CD8-positive, alpha-beta memory T cell (primary cell): ENCODE measurements at regions of chr19 and their contacts with region 1.

Region 1: DNA sequence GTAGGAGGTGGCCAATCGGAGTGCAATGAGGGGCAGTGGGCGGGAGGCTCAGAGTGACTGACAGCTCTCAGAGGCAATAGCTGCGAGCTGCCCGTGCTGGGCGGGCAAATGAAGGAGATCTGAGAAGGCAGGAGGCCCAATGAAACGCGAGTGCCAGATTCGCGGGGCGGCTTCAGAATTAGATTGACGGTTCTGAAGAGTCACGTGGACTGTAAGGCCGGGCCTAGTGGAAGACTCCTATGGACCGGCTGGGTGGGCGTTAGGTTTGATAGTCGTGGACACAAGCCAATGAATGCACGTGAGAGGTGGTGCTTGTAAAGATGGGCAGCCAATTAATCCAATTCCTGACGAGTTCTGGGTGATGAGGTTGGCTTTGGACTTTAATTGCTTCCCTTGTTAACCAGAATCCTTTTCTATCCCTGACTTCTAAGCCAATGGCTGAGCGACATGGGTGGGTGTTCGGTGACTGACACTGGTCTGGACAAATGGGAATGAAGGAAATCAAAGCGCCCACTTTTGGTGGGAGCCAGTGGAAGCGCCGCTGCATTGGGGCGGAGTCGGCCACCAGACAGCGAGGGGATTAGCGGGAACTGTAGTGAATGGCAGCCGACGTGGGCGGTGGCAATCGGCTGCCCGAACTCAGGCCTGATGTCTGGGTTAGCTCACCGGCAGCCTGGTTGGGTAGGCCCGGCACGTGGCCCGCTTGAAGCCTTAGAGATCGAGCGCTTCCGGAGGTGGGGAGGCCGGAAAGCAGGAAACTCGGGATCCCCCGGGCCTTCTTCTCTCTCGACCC is 524 bp upstream of the KHSRP start:
- DNase-seq: peak; percentile 97 to 100 (median 99)
- H3K4me3 ChIP-seq: peak overlapping the region; percentile 26
- H3K4me3 Mint-ChIP-seq: peak overlapping the region; percentile 73 to 95 (median 82)
- H3K27ac ChIP-seq: peak overlapping the region; percentile 53
- H3K27ac Mint-ChIP-seq: peak overlapping the region; percentile 74 to 98 (median 90)
- H3K4me1 ChIP-seq: peaks cover 27% of the 10 kb centered on the region
- H3K4me1 Mint-ChIP-seq: peaks cover 30 to 46% (median 33%) of the 10 kb centered on the region in 3 donors
- H3K27me3 ChIP-seq: no peaks in the 10 kb centered on the region
- H3K27me3 Mint-ChIP-seq: peaks cover 0 to 1% of the 10 kb centered on the region in 2 donors

Region 2: GRCh38 chr19:6362027-6362350 is 63.1 kb before region 1 on chr19:
- CTCF ChIA-PET with region 1: no interaction called
- POLR2A ChIA-PET with region 1: interaction called, 10 read pairs
- DNase-seq: no peak
- H3K4me3 ChIP-seq: peak overlapping the region; percentile 71
- H3K4me3 Mint-ChIP-seq: peak overlapping the region; percentile 86 to 98 (median 95)
- H3K27ac ChIP-seq: peak overlapping the region; percentile 85
- H3K27ac Mint-ChIP-seq: peak overlapping the region; percentile 89 to 98 (median 92)
- H3K4me1 ChIP-seq: peaks cover 16% of the 10 kb centered on the region
- H3K4me1 Mint-ChIP-seq: peaks cover 17 to 28% (median 22%) of the 10 kb centered on the region in 3 donors
- H3K27me3 ChIP-seq: no peaks in the 10 kb centered on the region
- H3K27me3 Mint-ChIP-seq: no peaks in the 10 kb centered on the region

Region 3: DNA sequence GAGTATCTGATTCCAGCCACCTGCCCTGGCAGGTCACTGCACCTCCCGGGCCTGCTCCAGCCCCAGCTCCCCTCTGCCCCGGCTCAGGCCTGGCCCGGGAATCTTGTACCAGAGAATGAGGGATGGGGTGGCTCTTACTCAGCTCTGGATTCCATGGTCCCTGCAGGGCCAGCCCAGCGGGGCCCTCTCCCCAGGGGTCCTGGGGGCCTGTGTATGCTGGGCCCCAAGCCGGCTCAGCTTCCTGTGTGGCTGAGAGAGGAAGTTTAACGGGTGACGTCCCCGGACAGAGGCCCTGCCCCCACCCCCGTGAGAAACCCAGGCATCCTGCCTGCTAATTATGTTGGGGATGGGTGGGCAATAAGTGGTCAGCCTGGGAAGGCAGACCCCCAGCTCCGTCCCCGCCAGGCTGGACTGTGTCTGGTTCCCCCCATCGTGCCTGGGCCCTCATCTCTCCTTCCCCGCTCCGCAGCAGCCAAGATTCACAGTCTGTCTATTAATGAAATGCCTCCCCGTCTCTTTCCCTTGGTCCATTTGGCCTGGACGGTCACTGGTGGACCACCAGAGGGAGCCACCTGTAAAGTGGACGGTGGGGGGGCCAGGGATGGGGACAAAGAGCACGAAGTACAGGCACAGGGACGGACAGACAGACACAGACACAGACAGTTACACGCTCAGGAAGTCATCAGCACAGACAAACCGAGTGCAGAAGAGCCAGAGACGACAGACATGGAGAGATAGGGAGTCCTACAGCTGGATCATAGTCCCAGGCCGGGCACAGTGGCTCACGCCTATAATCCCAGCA is 56.6 kb after region 1 on chr19 and contains the start of gene DENND1C:
- CTCF ChIA-PET with region 1: no interaction called
- POLR2A ChIA-PET with region 1: interaction called, 14 read pairs
- DNase-seq: peak; percentile 43 to 80 (median 60)
- H3K4me3 ChIP-seq: peak within 1 kb of the TSS; percentile 77
- H3K4me3 Mint-ChIP-seq: peak within 1 kb of the TSS; percentile 92 to 99 (median 98)
- H3K27ac ChIP-seq: peak within 1 kb of the TSS; percentile 80
- H3K27ac Mint-ChIP-seq: peak within 1 kb of the TSS; percentile 94 to 100 (median 98)
- H3K4me1 ChIP-seq: peaks cover 38% of the 10 kb centered on the region
- H3K4me1 Mint-ChIP-seq: peaks cover 26 to 42% (median 42%) of the 10 kb centered on the region in 3 donors
- H3K27me3 ChIP-seq: no peaks in the 10 kb centered on the region
- H3K27me3 Mint-ChIP-seq: peaks cover 0 to 1% of the 10 kb centered on the region in 2 donors
- total RNA-seq, gene DENND1C: 51.9 to 55.1 TPM